ENCODE measurements at regions of chr18 and their contacts with region 1.

Region 1: GRCh38 chr18:71727909-71728308 is 816.2 kb downstream of the CBLN2 start:
- DNase-seq: no peak
- H3K4me3 Mint-ChIP-seq: no peak overlapping the region
- H3K27ac Mint-ChIP-seq: no peak overlapping the region
- H3K4me1 Mint-ChIP-seq: no peaks in the 10 kb centered on the region
- H3K27me3 Mint-ChIP-seq: no peaks in the 10 kb centered on the region

Region 2: DNA sequence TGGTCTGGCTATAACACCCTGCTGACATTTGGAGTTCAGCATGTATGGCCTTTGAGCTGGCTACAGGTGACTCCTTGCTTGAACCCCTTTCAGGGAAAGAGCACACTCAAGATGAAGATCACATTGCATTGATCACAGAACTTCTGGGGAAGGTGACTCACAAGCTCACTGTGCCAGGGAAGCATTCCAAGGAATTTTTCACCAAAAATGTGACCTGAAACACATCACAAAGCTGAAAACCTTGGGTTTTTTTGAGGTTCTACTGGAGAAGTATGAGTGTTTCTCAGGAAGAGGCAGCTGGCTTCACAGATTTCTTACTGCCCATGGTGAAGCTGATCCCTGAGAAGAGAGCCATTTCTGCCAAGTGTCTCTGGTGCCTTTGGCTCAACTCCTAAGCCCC is 62.8 kb before region 1 on chr18:
- intact Hi-C with region 1: loop called (anchors 10 kb)
- DNase-seq: no peak
- H3K4me3 Mint-ChIP-seq: no peak overlapping the region
- H3K27ac Mint-ChIP-seq: no peak overlapping the region
- H3K4me1 Mint-ChIP-seq: no peaks in the 10 kb centered on the region
- H3K27me3 Mint-ChIP-seq: no peaks in the 10 kb centered on the region

Region 3: GRCh38 chr18:71743634-71744033 is 15.7 kb after region 1 on chr18:
- intact Hi-C with region 1: no loop called
- DNase-seq: no peak
- H3K4me3 Mint-ChIP-seq: no peak overlapping the region
- H3K27ac Mint-ChIP-seq: no peak overlapping the region
- H3K4me1 Mint-ChIP-seq: no peaks in the 10 kb centered on the region
- H3K27me3 Mint-ChIP-seq: no peaks in the 10 kb centered on the region

Measured in activated T-helper 1 cell treated with anti-CD3 and anti-CD28 coated beads, Interleukin-12 subunit alpha, Interleukin-12 subunit beta, Interleukin-2, Interleukin-4 antibody, amounts not matched to agents 30 ng/mL and 10 ng/mL and 1 ng/mL, durations not matched to agents 14 hours and 24 hours and 36 hours (primary cell).